ENCODE measurements at regions of chr9 and their contacts with region 1.

Region 1: DNA sequence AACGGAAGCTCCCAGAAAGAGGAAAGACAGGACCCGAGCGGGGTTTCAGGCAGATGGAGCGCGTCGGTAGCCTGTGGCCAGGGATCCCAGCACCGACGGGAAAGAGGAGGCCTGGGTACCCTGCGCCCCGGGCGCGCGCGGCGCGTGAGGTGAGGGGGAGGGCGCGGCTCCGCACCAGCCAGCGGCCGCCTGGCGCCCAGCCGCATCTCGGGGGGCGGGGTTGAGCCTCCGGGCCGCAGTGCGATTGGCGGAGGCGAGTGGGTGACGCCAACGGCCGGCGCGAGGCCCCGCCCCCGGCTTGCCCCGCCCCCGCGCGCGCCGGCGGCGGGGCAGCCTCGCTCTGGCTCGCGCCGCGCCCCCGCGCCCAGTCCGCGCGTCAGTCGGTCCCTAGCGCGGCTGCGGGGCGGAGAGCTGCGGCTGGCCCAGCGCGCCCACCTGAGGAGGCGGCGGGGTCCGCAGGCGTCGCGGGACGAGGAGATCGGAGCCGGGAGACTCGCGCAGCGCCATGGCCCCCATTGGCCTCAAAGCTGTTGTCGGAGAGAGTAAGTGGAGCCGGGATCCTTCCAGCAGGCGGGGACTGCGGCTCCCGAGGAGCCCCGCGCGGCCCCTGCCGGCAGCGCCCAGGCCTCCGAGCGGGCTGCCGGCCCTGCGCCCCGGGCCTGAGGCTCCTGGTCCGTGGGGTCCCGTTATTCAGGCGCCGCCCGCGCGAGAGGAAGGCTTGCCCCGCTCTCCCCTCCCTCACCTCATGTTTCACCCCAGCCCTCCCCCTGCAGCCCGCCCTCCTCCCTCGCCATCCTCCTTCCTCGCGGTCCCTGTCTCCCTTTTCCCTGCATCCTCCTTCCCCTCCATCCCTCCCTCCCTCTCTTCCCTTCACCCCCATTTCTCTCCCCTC is at the start of gene STXBP1:
- DNase-seq: peak; percentile 90 to 96 (median 94)
- H3K4me3 ChIP-seq: peak within 1 kb of the TSS; percentile 71
- H3K27ac ChIP-seq: peak within 1 kb of the TSS; percentile 84 to 96
- H3K4me1 ChIP-seq: peaks cover 9% of the 10 kb centered on the region
- H3K27me3 ChIP-seq: no peaks in the 10 kb centered on the region
- CTCF ChIP-seq: peak in 1 of 3 donors; percentile 60
- EP300 ChIP-seq: no peak
- POLR2A ChIP-seq: peak; percentile 95
- total RNA-seq, gene STXBP1: 46.8 to 102 (median 75.7) TPM

Region 2: DNA sequence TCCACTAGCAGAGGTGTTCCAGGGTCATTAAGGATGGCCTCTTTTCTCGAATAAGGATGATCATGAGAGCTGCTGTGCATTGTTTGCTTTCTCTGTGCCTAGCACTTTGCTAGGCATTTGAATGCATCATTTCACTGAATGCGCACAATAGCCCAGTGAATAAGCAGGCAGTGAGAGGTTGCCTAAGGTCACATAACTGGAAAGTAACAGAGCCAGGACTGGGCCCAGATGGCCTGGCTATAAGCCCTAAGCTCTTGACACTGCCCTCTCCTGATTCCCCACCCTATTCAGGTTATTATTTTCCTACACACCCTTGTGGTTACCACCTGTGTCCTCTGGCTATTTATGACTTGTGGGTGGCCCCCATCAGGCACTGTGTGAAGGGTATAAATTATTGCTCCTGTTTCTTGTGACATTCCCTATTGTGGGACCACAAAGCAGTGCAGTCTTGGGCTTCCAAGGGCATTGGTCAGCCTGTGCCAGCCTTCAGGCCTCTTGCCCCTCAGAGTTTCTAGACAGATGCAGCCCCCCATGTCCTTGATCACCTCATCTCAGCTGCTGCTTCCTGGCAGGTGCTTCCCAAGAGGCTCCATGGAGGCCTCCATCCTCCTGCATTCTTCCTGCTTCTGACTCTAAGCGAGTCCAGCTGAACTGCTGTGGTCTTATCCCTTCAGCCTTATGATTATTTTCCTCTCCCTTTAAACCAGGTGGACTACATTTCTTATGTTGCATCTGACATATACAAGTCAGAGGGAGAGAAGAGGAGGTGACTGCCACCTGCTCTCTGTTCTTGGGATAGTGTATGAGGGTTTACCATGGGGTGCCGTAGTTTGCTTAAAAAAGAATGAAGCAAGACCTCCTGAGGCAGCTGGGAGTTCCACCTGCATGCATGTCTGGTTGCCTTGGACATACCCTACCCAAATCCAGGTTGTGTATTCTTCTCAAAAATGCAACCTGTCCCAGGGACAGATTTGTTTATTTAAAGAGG is 537.3 kb before region 1 on chr9:
- intact Hi-C with region 1: no loop called
- DNase-seq: no peak
- H3K4me3 ChIP-seq: no peak overlapping the region
- H3K27ac ChIP-seq: no peak overlapping the region
- H3K4me1 ChIP-seq: no peaks in the 10 kb centered on the region
- H3K27me3 ChIP-seq: no peaks in the 10 kb centered on the region
- CTCF ChIP-seq: no peak
- EP300 ChIP-seq: no peak
- POLR2A ChIP-seq: no peak

Region 3: GRCh38 chr9:129383561-129384416 is 1771.6 kb after region 1 on chr9:
- intact Hi-C with region 1: loop called in 1 of 4 experiments (anchors 5 kb)
- DNase-seq: peak; percentile 86 to 91 (median 87)
- H3K4me3 ChIP-seq: peak overlapping the region; percentile 69
- H3K27ac ChIP-seq: peak overlapping the region; percentile 39 to 86
- H3K4me1 ChIP-seq: peaks cover 4% of the 10 kb centered on the region
- H3K27me3 ChIP-seq: no peaks in the 10 kb centered on the region
- CTCF ChIP-seq: peak in 2 of 3 donors; percentile 30 to 44
- EP300 ChIP-seq: no peak
- POLR2A ChIP-seq: no peak